Activated CD4-positive, alpha-beta memory T cell treated with anti-CD3 and anti-CD28 coated beads for 36 hours (primary cell): ENCODE measurements at regions of chr16 and their contacts with region 1.

Region 1: DNA sequence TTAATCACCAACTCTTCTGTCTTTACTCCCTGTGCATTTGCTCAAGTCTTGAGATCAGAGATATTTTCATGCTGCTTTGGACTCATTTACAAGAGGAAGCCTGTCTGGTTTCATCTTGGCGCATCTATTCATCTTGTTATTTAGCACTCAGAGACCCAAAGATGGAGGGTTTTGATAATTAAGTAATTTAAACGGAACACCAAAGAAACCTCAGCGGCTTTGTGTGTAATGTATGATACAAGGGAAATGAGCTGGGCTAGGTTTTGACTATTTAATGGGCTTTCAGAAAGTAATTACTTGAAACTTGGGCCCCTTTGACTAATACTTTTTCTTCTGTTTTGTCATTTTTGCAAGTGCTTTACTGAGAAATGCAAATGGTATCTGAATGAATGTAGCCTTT is 66.2 kb upstream of the CACNG3 start:
- DNase-seq: no peak
- H3K4me3 Mint-ChIP-seq: no peak overlapping the region
- H3K27ac Mint-ChIP-seq: peak overlapping the region; percentile 68
- H3K4me1 Mint-ChIP-seq: peaks cover 43% of the 10 kb centered on the region
- H3K27me3 Mint-ChIP-seq: no peaks in the 10 kb centered on the region

Region 2: DNA sequence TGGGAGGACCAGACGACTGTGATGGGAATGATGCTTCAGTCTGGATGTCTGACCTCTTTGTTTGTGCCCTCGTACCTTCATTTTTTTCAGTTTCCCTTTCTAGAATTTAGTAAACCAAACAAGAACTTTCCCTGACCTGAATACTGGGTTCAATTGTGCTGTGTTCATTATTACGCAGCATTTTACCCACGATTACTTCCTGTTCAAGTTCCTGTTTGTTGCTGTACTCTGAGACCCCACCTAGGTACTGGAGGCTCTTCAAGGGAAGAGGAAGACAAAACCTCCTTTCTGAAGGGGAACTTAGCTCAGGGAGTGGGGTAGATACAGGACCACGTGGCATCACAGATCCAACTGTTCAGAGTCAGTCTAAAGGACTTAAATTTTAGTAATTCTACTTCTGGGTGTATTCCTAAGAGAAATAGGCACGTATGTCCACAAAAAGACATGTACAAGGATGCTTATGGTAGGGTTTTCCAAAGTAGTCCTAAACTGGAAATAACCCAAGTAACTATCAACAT is 363.4 kb before region 1 on chr16:
- CTCF ChIA-PET with region 1: no interaction called
- POLR2A ChIA-PET with region 1: no interaction called
- intact Hi-C with region 1: loop called (anchors 2 kb)
- DNase-seq: no peak
- H3K4me3 Mint-ChIP-seq: peak overlapping the region; percentile 43
- H3K27ac Mint-ChIP-seq: peak overlapping the region; percentile 62
- H3K4me1 Mint-ChIP-seq: peaks cover 20% of the 10 kb centered on the region
- H3K27me3 Mint-ChIP-seq: no peaks in the 10 kb centered on the region

Region 3: DNA sequence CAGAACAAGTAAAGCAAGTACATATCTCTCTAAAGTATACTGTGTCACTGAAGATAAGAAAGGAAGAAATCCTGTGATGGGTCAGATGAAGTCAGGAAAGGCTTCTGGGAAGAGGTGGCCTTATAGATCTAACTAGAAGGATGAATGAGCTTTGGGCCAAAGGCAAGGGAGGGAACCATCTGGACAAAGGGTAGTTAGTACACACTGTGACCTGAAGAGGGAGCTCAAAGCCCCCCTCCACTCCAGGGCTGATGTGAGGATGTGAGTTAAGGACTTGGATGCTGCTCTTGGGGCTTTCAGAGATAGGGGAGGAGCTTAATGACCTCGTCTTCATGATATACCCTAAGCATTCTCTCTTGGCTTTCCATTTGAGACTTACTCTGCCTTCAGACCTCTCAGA is 119.1 kb before region 1 on chr16:
- CTCF ChIA-PET with region 1: interaction called, 14 read pairs
- POLR2A ChIA-PET with region 1: no interaction called
- intact Hi-C with region 1: loop called (anchors 5 kb)
- DNase-seq: peak; percentile 66
- H3K4me3 Mint-ChIP-seq: no peak overlapping the region
- H3K27ac Mint-ChIP-seq: no peak overlapping the region
- H3K4me1 Mint-ChIP-seq: peaks cover 39% of the 10 kb centered on the region
- H3K27me3 Mint-ChIP-seq: no peaks in the 10 kb centered on the region

Region 4: GRCh38 chr16:24139282-24139681 is 50.7 kb before region 1 on chr16:
- CTCF ChIA-PET with region 1: no interaction called
- POLR2A ChIA-PET with region 1: interaction called, 5 read pairs
- intact Hi-C with region 1: loop called (anchors 1 kb)
- DNase-seq: peak; percentile 26
- H3K4me3 Mint-ChIP-seq: no peak overlapping the region
- H3K27ac Mint-ChIP-seq: peak overlapping the region; percentile 3
- H3K4me1 Mint-ChIP-seq: peaks cover 22% of the 10 kb centered on the region
- H3K27me3 Mint-ChIP-seq: no peaks in the 10 kb centered on the region

Region 5: GRCh38 chr16:24151482-24151939 is 38.4 kb before region 1 on chr16:
- CTCF ChIA-PET with region 1: interaction called, 4 read pairs
- POLR2A ChIA-PET with region 1: no interaction called
- intact Hi-C with region 1: loop called (anchors 1 kb)
- DNase-seq: peak; percentile 26
- H3K4me3 Mint-ChIP-seq: no peak overlapping the region
- H3K27ac Mint-ChIP-seq: peak overlapping the region; percentile 43
- H3K4me1 Mint-ChIP-seq: peaks cover 47% of the 10 kb centered on the region
- H3K27me3 Mint-ChIP-seq: no peaks in the 10 kb centered on the region

Region 6: DNA sequence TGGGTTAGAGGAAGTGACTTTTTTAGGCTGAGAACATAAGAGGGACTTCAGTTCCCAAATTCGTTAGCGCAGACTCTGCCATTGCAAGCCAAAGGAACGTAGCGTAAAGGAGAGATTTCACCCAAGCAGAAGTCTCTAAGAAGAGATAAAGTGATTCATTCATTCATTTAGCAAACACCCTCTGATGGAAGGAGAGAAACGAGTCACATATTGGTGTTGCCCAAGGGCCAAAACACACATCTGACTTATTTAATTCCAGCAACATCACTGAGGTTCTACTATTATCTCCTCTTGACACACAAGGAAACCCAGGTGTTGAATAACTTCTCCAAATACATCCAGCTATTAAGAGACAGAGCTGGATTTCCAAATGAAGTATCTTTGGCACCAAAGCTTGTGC is 19.5 kb before region 1 on chr16:
- CTCF ChIA-PET with region 1: interaction called, 4 read pairs
- POLR2A ChIA-PET with region 1: interaction called, 4 read pairs
- intact Hi-C with region 1: loop called (anchors 1 kb)
- DNase-seq: no peak
- H3K4me3 Mint-ChIP-seq: no peak overlapping the region
- H3K27ac Mint-ChIP-seq: no peak overlapping the region
- H3K4me1 Mint-ChIP-seq: peaks cover 8% of the 10 kb centered on the region
- H3K27me3 Mint-ChIP-seq: no peaks in the 10 kb centered on the region

Region 7: DNA sequence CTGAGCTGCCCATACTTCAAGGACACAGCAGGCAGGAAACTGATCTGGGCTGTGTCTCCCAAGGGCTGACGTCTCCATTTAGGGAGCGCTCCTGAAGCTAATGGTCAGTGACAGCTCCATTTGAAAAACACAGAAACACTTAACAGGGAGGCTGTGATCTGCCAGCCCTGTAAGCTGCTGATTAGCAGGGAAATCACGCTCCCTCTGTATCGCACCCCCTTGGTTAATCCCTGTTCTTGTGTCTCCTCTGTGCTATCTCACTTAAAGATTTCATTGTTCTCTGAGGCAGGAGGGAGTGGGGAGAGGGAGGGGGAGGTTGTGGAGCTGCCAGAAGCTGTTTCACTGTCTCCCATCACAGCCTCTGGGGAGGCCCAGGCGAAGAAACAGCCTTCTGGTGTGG is 18.8 kb after region 1 on chr16:
- CTCF ChIA-PET with region 1: no interaction called
- POLR2A ChIA-PET with region 1: no interaction called
- intact Hi-C with region 1: no loop called
- DNase-seq: no peak
- H3K4me3 Mint-ChIP-seq: no peak overlapping the region
- H3K27ac Mint-ChIP-seq: no peak overlapping the region
- H3K4me1 Mint-ChIP-seq: no peaks in the 10 kb centered on the region
- H3K27me3 Mint-ChIP-seq: no peaks in the 10 kb centered on the region

Region 8: DNA sequence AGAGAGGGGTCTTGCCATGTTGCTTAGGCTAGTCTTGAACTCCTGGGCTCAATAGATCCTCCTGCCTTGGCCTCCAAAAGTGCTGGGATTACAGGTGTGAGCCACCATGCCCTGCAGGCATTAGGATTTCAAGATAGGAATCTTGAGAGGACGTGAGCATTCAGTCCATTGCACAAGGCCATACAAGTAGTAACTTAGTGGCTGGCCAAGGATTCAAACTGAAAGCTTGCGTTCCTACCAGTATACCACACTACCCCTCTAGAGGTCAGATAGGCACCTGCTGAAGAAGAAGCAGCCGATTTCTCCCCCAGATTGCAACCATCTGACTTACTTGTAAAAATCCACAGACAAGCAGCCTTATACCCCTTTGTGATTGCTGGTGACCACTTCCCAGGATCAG is 147.1 kb after region 1 on chr16:
- CTCF ChIA-PET with region 1: no interaction called
- POLR2A ChIA-PET with region 1: no interaction called
- intact Hi-C with region 1: no loop called
- DNase-seq: no peak
- H3K4me3 Mint-ChIP-seq: no peak overlapping the region
- H3K27ac Mint-ChIP-seq: no peak overlapping the region
- H3K4me1 Mint-ChIP-seq: no peaks in the 10 kb centered on the region
- H3K27me3 Mint-ChIP-seq: no peaks in the 10 kb centered on the region

Region 9: DNA sequence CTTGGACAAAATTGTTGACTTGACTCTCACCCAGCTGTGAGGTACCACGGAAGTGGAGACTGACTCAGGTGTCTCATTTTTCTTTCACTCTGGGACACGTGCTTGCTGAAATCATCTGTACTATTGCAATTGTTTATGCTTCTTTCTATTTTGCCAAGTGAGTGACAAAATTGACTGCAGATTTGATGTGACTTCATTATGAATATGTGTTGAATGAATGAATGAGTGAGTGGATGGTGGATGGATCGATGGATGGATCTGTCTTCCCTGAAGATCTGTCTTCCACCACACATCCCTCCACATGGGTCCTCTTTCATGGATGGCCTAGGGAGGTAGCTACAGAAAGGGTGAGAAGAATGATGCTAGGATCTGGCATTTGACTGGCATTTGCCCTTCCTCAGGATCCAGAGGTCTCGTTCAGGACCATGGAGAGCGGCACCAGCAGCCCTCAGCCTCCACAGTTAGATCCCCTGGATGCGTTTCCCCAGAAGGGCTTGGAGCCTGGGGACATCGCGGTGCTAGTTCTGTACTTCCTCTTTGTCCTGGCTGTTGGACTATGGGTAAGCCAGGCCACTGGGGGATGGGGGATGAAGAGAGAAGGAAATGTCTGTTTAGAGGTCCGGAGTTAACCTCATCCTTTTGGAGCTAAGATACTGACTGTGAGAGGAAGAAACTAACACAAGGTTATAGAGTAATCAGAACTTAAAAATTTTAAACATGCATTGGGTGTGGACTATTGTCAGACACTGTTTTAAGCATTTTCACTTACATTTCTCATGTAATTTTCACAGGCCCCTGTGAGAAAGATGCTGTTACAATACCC is 668.5 kb after region 1 on chr16:
- CTCF ChIA-PET with region 1: no interaction called
- POLR2A ChIA-PET with region 1: no interaction called
- intact Hi-C with region 1: loop called (anchors 5 kb)
- DNase-seq: peak; percentile 67
- H3K4me3 Mint-ChIP-seq: no peak overlapping the region
- H3K27ac Mint-ChIP-seq: no peak overlapping the region
- H3K4me1 Mint-ChIP-seq: no peaks in the 10 kb centered on the region
- H3K27me3 Mint-ChIP-seq: peaks cover 10% of the 10 kb centered on the region